A673 (cell line): ENCODE measurements at regions of chr12 and their contacts with region 1.

Region 1: GRCh38 chr12:32290411-32290810 is 108.9 kb upstream of the FGD4 start:
- DNase-seq: no peak
- H3K4me3 ChIP-seq: no peak overlapping the region
- H3K27ac ChIP-seq: no peak overlapping the region
- H3K4me1 ChIP-seq: peaks cover 23% of the 10 kb centered on the region
- H3K27me3 ChIP-seq: no peaks in the 10 kb centered on the region
- CTCF ChIP-seq: no peak

Region 2: GRCh38 chr12:32083489-32083888 is 206.9 kb before region 1 on chr12:
- CTCF ChIA-PET with region 1: no interaction called
- POLR2A ChIA-PET with region 1: no interaction called
- intact Hi-C with region 1: no loop called
- DNase-seq: peak; percentile 21
- H3K4me3 ChIP-seq: no peak overlapping the region
- H3K27ac ChIP-seq: no peak overlapping the region
- H3K4me1 ChIP-seq: no peaks in the 10 kb centered on the region
- H3K27me3 ChIP-seq: no peaks in the 10 kb centered on the region
- CTCF ChIP-seq: no peak

Region 3: GRCh38 chr12:32211066-32211899 is 79.1 kb before region 1 on chr12:
- CTCF ChIA-PET with region 1: no interaction called
- POLR2A ChIA-PET with region 1: no interaction called
- intact Hi-C with region 1: no loop called
- DNase-seq: no peak
- H3K4me3 ChIP-seq: no peak overlapping the region
- H3K27ac ChIP-seq: no peak overlapping the region
- H3K4me1 ChIP-seq: peaks cover 6% of the 10 kb centered on the region
- H3K27me3 ChIP-seq: no peaks in the 10 kb centered on the region
- CTCF ChIP-seq: no peak

Region 4: DNA sequence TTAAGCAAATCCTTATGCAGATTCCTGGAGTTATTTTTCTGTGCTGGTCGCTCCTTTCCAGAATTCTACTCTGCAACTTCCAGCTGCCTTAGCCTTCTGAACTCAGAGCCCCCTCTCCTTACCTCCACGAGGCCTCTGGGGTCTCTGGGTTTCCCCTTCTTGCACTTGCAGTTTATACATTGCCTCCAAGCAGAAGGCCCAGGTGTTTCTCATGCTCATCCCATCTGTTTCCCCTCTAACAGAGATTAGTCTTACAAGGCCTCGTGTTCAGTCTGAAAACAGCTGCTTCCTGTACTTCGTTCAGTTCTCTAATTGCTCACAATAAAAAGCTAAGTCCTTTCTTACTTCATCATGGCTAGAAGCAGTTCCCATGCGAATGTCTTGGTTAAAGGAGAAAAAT is 25.4 kb before region 1 on chr12:
- CTCF ChIA-PET with region 1: no interaction called
- POLR2A ChIA-PET with region 1: interaction called, 15 read pairs
- intact Hi-C with region 1: no loop called
- DNase-seq: peak; percentile 77
- H3K4me3 ChIP-seq: no peak overlapping the region
- H3K27ac ChIP-seq: peak overlapping the region; percentile 88
- H3K4me1 ChIP-seq: peaks cover 28% of the 10 kb centered on the region
- H3K27me3 ChIP-seq: no peaks in the 10 kb centered on the region
- CTCF ChIP-seq: no peak

Region 5: DNA sequence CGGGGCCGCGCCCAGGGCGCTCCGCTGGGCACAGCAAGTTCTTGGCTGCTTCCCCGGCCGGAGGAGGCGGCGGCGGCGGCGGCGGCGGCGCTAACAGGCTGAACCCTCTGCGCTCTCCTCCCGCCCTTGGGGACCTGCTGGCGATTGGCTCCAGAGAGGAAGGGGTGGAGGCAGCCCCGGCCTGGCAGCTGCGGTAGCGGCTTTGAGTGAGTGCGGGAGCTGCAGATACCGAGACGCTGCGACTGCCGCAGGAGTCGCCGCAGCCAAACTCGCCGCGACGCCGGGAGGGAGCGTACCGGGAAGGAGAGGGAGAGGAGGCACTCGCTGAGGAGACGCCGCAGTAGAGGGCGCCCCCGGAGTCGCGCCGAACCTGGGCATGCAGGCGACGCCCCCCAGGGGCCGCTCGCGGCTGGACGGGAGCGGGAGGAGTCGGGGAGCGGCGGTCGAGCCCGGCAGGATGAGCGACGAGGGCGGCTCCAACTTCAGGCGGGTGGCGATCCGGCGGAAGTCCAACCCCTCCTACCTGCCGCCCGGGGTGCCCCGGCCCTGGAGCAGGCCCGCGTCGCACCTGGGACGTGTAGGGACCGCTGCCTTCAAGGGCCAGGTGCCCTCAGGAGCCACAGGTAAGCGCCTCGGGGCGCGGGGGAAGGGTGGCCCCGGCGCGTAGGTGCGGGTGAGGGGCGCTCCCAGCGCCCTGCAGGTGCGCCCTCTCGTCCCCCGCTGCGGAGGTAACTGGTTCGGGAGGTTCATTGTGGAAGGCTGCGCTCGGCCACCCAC is 109.1 kb after region 1 on chr12 and contains the start of gene FGD4:
- CTCF ChIA-PET with region 1: no interaction called
- POLR2A ChIA-PET with region 1: no interaction called
- intact Hi-C with region 1: no loop called
- DNase-seq: peak; percentile 91
- H3K4me3 ChIP-seq: peak within 1 kb of the TSS; percentile 65
- H3K27ac ChIP-seq: no peak within 1 kb of the TSS
- H3K4me1 ChIP-seq: peaks cover 12% of the 10 kb centered on the region
- H3K27me3 ChIP-seq: peaks cover 9% of the 10 kb centered on the region
- CTCF ChIP-seq: peak; percentile 70
- total RNA-seq, gene FGD4: 21.5 and 22.6 TPM in 2 replicates